Dorsolateral prefrontal cortex (tissue), 120 donors: ENCODE measurements at regions of chr5 and their contacts with region 1.

Region 1: GRCh38 chr5:125412561-125413495 is 666.4 kb upstream of the ZNF608 start:
- DNase-seq: peak; percentile 80 to 95 (median 92)
- H3K4me3 ChIP-seq: peak overlapping the region in 58 of 59 donors; percentile 4 to 67 (median 45)
- H3K27ac ChIP-seq: peak overlapping the region; percentile 79 to 99 (median 95)
- H3K27me3 ChIP-seq: no peaks in the 10 kb centered on the region
- CTCF ChIP-seq: peak in 54 of 56 donors; percentile 17 to 69 (median 50)

Region 2: GRCh38 chr5:124649491-124650146 is 763.2 kb before region 1 on chr5:
- intact Hi-C with region 1: loop called in 1 of 2 experiments (anchors 10 kb)
- DNase-seq: peak in 3 of 10 donors; percentile 41 to 49 (median 48)
- H3K4me3 ChIP-seq: peak overlapping the region in 32 of 59 donors; percentile 1 to 76 (median 16)
- H3K27ac ChIP-seq: peak overlapping the region in 54 of 59 donors; percentile 7 to 97 (median 90)
- H3K27me3 ChIP-seq: no peaks in the 10 kb centered on the region
- CTCF ChIP-seq: peak in 2 of 56 donors; percentile 5 to 16

Region 3: DNA sequence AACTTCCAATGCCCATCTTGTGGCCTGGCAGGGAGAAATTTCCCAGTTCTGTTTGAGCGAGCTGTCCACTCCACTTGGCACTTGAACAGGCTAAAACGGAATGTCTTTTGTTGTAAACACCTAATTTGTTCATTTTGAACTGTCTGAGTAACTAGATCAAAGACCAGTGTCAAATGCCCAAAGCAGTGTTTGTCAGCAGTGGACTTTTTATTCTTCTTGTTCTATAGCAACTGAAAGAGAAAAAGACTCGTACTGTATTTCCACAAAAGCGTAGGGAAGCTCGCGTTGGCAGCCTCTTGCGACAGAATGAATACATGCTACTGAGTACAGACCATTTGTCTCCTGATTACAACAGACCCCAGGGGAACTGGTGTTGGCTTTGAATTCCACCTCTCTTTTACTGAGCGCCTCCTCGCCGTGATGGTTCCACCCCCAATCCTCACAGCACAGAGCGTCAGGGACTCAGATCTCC is 64.6 kb before region 1 on chr5:
- intact Hi-C with region 1: loop called in 1 of 2 experiments (anchors 2 kb)
- DNase-seq: peak in 4 of 10 donors; percentile 10 to 59 (median 34)
- H3K4me3 ChIP-seq: peak overlapping the region in 58 of 59 donors; percentile 1 to 61 (median 36)
- H3K27ac ChIP-seq: peak overlapping the region in 48 of 59 donors; percentile 3 to 83 (median 62)
- H3K27me3 ChIP-seq: no peaks in the 10 kb centered on the region
- CTCF ChIP-seq: no peak

Region 4: GRCh38 chr5:125484742-125485641 is 72.2 kb after region 1 on chr5:
- intact Hi-C with region 1: loop called (anchors 2 to 5 kb)
- DNase-seq: peak; percentile 22 to 94 (median 84)
- H3K4me3 ChIP-seq: peak overlapping the region in 31 of 59 donors; percentile 1 to 39 (median 12)
- H3K27ac ChIP-seq: peak overlapping the region; percentile 88 to 99 (median 96)
- H3K27me3 ChIP-seq: no peaks in the 10 kb centered on the region
- CTCF ChIP-seq: peak in 5 of 56 donors; percentile 6 to 21 (median 13)

Region 5: DNA sequence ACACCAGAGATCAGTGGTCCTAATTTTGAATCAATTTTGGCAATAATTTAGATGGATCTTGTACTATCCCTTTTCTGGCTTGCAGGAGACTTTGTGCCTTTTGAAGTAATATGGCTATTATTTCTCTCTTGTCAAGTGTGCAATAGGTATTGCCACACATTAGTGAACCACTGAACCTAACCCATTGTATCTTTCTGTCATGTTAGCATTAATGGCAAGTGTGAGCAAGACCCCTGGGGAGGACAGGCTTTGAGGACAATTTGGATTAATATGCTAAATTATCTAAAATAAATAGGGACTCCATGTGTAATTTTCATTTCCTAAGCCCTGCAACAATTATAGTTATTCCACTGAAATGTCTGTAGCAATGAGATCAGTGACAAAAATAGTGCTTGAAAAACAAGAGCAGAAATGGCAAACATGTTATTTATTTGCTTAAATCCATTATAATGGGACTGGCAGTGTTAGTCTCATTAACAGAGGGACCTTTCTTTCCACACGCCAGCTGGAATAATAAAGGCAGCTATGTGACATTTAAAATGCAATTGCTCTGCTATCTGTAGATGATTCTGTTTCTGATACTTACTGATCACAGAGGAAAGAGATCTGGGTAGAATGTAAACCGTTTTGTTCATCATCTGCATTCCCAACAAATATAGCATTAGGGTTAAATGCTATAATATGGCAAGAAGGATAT is 87.0 kb after region 1 on chr5:
- intact Hi-C with region 1: loop called in 1 of 2 experiments (anchors 5 kb)
- DNase-seq: no peak
- H3K4me3 ChIP-seq: peak overlapping the region in 2 of 59 donors; percentile 4 to 11
- H3K27ac ChIP-seq: peak overlapping the region; percentile 73 to 98 (median 94)
- H3K27me3 ChIP-seq: no peaks in the 10 kb centered on the region
- CTCF ChIP-seq: no peak

Region 6: GRCh38 chr5:125575891-125576505 is 163.2 kb after region 1 on chr5:
- intact Hi-C with region 1: loop called (anchors 10 kb)
- DNase-seq: peak; percentile 7 to 84 (median 74)
- H3K4me3 ChIP-seq: peak overlapping the region in 29 of 59 donors; percentile 2 to 47 (median 18)
- H3K27ac ChIP-seq: peak overlapping the region in 58 of 59 donors; percentile 1 to 91 (median 78)
- H3K27me3 ChIP-seq: no peaks in the 10 kb centered on the region
- CTCF ChIP-seq: peak in 35 of 56 donors; percentile 8 to 50 (median 33)

Region 7: GRCh38 chr5:125823572-125823971 is 410.7 kb after region 1 on chr5:
- intact Hi-C with region 1: loop called in 1 of 2 experiments (anchors 5 kb)
- DNase-seq: no peak
- H3K4me3 ChIP-seq: no peak overlapping the region
- H3K27ac ChIP-seq: no peak overlapping the region
- H3K27me3 ChIP-seq: no peaks in the 10 kb centered on the region
- CTCF ChIP-seq: no peak